ENCODE measurements at regions of chr4 and their contacts with region 1.

Region 1: GRCh38 chr4:82373816-82374625 is at the start of gene HNRNPD:
- DNase-seq: peak; percentile 77 to 99 (median 88)
- ATAC-seq: peak; percentile 83
- H3K4me3 ChIP-seq: peak within 1 kb of the TSS; percentile 97
- H3K4me3 Mint-ChIP-seq: peak within 1 kb of the TSS; percentile 99
- H3K27ac ChIP-seq: peak within 1 kb of the TSS; percentile 99
- H3K27ac Mint-ChIP-seq: peak within 1 kb of the TSS; percentile 98
- H3K4me1 ChIP-seq: peaks cover 24% of the 10 kb centered on the region
- H3K4me1 Mint-ChIP-seq: peaks cover 71% of the 10 kb centered on the region
- H3K27me3 ChIP-seq: no peaks in the 10 kb centered on the region
- H3K27me3 Mint-ChIP-seq: no peaks in the 10 kb centered on the region
- CTCF ChIP-seq: peak; percentile 11
- total RNA-seq, gene HNRNPD: 235 to 244 TPM

Region 2: DNA sequence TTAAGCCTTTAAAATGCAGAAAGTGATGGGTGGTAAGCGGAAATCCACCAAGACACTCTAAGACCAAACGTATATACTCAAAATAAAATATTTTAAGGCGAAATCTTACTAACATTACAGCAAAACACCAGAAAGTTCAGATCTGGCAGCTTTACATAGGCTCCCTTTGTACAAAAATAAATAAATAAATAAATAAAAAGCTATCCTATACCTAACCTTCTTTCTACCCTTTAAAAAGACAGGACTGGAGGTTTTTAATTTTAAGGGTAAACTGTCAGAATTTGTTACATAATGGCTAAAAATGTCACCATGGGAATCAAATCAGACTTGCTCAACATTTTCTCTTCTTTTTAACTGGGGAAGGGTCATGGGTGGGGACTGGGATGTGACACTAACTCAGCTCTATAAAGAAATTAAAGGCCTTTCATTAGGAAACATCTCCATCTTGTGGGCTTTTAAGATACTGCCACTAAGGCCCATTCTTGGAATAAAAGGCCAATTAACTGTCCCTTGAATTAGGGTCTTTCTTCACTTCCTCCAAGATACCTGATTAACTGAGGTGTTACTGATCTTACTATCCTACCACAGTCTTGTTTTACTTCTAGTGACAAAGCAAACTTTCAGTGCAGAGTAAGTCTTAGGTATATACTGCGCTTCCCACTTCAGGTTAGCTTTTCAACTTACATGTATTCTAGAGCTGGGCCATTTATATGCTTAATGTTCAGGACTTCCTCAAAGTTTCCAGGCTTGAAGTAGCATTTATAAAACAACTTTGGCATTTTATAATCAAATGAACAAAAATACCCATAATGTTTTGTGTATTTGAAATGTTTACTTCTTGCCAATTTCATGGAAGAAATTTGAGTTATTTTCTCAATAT is 13.5 kb before region 1 on chr4:
- CTCF ChIA-PET with region 1: interaction called, 18 read pairs
- POLR2A ChIA-PET with region 1: interaction called, 24 read pairs
- intact Hi-C with region 1: loop called in 1 of 2 experiments (anchors 1 kb)
- DNase-seq: peak in 3 of 14 experiments; percentile 50 to 61 (median 61)
- ATAC-seq: peak; percentile 80
- H3K4me3 ChIP-seq: no peak overlapping the region
- H3K4me3 Mint-ChIP-seq: peak overlapping the region; percentile 36
- H3K27ac ChIP-seq: peak overlapping the region in 1 of 2 donors; percentile 7
- H3K27ac Mint-ChIP-seq: peak overlapping the region; percentile 60
- H3K4me1 ChIP-seq: peaks cover 25% of the 10 kb centered on the region
- H3K4me1 Mint-ChIP-seq: peaks cover 96% of the 10 kb centered on the region
- H3K27me3 ChIP-seq: peaks cover 0 to 2% of the 10 kb centered on the region in 2 experiments
- H3K27me3 Mint-ChIP-seq: no peaks in the 10 kb centered on the region
- CTCF ChIP-seq: peak; percentile 72

Region 3: GRCh38 chr4:82900331-82901128 is 526.5 kb after region 1 on chr4 and contains the start of gene THAP9:
- CTCF ChIA-PET with region 1: no interaction called
- POLR2A ChIA-PET with region 1: no interaction called
- intact Hi-C with region 1: loop called in 1 of 2 experiments (anchors 5 kb)
- DNase-seq: peak; percentile 94 to 100 (median 96)
- ATAC-seq: peak; percentile 86
- H3K4me3 ChIP-seq: peak within 1 kb of the TSS; percentile 72
- H3K4me3 Mint-ChIP-seq: no peak within 1 kb of the TSS
- H3K27ac ChIP-seq: peak within 1 kb of the TSS; percentile 94 to 99
- H3K27ac Mint-ChIP-seq: no peak within 1 kb of the TSS
- H3K4me1 ChIP-seq: peaks cover 11% of the 10 kb centered on the region
- H3K4me1 Mint-ChIP-seq: peaks cover 13% of the 10 kb centered on the region
- H3K27me3 ChIP-seq: no peaks in the 10 kb centered on the region
- H3K27me3 Mint-ChIP-seq: no peaks in the 10 kb centered on the region
- CTCF ChIP-seq: no peak
- total RNA-seq, gene THAP9: 3.8 to 4.3 TPM

Region 4: GRCh38 chr4:83034630-83035494 is 660.8 kb after region 1 on chr4 and contains the start of gene COPS4:
- CTCF ChIA-PET with region 1: no interaction called
- POLR2A ChIA-PET with region 1: interaction called, 9 read pairs
- intact Hi-C with region 1: loop called in 1 of 2 experiments (anchors 5 kb)
- DNase-seq: peak; percentile 86 to 100 (median 92)
- ATAC-seq: peak; percentile 95
- H3K4me3 ChIP-seq: peak within 1 kb of the TSS; percentile 83
- H3K4me3 Mint-ChIP-seq: peak within 1 kb of the TSS; percentile 99
- H3K27ac ChIP-seq: peak within 1 kb of the TSS; percentile 84
- H3K27ac Mint-ChIP-seq: peak within 1 kb of the TSS; percentile 90
- H3K4me1 ChIP-seq: peaks cover 28% of the 10 kb centered on the region
- H3K4me1 Mint-ChIP-seq: peaks cover 41% of the 10 kb centered on the region
- H3K27me3 ChIP-seq: no peaks in the 10 kb centered on the region
- H3K27me3 Mint-ChIP-seq: no peaks in the 10 kb centered on the region
- CTCF ChIP-seq: no peak
- total RNA-seq, gene COPS4: 26.0 to 27.6 TPM